ENCODE measurements at regions of chr11 and their contacts with region 1.

Region 1: GRCh38 chr11:8018484-8019313 is 31.6 kb downstream of the EIF3F start:
- DNase-seq: peak; percentile 92
- H3K4me3 ChIP-seq: peak overlapping the region; percentile 62 to 85
- H3K27ac ChIP-seq: peak overlapping the region; percentile 83 to 95
- H3K4me1 ChIP-seq: peaks cover 8% of the 10 kb centered on the region
- H3K27me3 ChIP-seq: no peaks in the 10 kb centered on the region
- CTCF ChIP-seq: no peak
- POLR2A ChIP-seq: no peak

Region 2: GRCh38 chr11:7804226-7804625 is 214.5 kb before region 1 on chr11:
- intact Hi-C with region 1: no loop called
- DNase-seq: no peak
- H3K4me3 ChIP-seq: no peak overlapping the region
- H3K27ac ChIP-seq: no peak overlapping the region
- H3K4me1 ChIP-seq: no peaks in the 10 kb centered on the region
- H3K27me3 ChIP-seq: no peaks in the 10 kb centered on the region
- CTCF ChIP-seq: no peak
- POLR2A ChIP-seq: no peak

Region 3: GRCh38 chr11:8070417-8071115 is 51.9 kb after region 1 on chr11:
- intact Hi-C with region 1: loop called (anchors 5 kb)
- DNase-seq: no peak
- H3K4me3 ChIP-seq: no peak overlapping the region
- H3K27ac ChIP-seq: no peak overlapping the region
- H3K4me1 ChIP-seq: peaks cover 20% of the 10 kb centered on the region
- H3K27me3 ChIP-seq: no peaks in the 10 kb centered on the region
- CTCF ChIP-seq: peak; percentile 38 to 57 (median 43)
- POLR2A ChIP-seq: no peak

Region 4: GRCh38 chr11:8099291-8099899 is 80.7 kb after region 1 on chr11:
- intact Hi-C with region 1: loop called (anchors 10 kb)
- DNase-seq: peak; percentile 90
- H3K4me3 ChIP-seq: no peak overlapping the region
- H3K27ac ChIP-seq: no peak overlapping the region
- H3K4me1 ChIP-seq: no peaks in the 10 kb centered on the region
- H3K27me3 ChIP-seq: no peaks in the 10 kb centered on the region
- CTCF ChIP-seq: peak; percentile 26 to 75 (median 63)
- POLR2A ChIP-seq: no peak